Motor neuron (in vitro differentiated cells): ENCODE measurements at regions of chr1 and their contacts with region 1.

Region 1: DNA sequence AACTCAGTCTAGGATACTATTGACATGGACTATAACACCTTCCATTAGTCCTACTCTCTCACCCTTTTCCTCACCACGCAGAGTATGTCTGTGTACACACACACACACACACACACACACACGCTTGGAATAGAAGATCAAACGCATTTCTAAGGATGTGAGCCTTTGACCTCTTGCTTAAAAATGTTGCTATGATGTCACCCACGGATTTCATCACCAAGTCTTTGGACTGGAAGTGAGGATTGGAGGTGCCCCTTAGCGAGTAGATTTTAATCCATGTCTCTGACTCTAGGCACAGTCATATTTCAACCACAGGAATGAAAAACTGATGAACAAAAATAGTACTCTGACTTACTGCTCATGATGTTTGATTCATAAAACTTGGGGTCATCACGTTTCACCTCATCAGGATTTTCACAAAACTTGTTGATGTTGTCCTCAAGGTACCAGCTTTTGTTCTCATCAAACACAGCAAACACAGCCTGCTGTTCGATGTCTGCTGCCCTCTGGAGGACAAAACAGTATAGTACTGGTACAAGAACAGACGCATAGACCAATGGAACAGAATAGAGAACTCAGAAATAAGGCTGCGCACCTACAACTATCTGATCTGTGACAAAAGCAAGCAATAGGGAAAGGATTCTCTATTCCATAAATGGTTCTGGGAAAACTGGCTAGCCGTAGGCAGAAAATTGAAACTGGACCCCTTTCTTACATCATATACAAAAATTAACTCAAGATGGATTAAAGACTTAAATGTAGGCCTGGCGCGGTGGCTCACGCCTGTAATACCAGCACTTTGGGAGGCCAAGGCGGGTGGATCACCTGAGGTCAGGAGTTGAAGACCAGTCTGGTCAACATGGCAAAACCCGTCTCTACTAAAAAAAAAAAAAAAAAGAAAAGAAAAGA is 39.9 kb downstream of the F5 start:
- ATAC-seq: peak; percentile 83 to 97 (median 94)
- H3K4me3 ChIP-seq: no peak overlapping the region
- H3K27ac ChIP-seq: no peak overlapping the region
- H3K4me1 ChIP-seq: no peaks in the 10 kb centered on the region

Region 2: GRCh38 chr1:168342572-168343280 is 1203.6 kb before region 1 on chr1:
- in situ Hi-C with region 1: loop called in 1 of 9 experiments (anchors 25 kb)
- ATAC-seq: peak; percentile 95 to 100 (median 100)
- H3K4me3 ChIP-seq: no peak overlapping the region
- H3K27ac ChIP-seq: no peak overlapping the region
- H3K4me1 ChIP-seq: peaks cover 0 to 2% of the 10 kb centered on the region in 2 donors

Region 3: DNA sequence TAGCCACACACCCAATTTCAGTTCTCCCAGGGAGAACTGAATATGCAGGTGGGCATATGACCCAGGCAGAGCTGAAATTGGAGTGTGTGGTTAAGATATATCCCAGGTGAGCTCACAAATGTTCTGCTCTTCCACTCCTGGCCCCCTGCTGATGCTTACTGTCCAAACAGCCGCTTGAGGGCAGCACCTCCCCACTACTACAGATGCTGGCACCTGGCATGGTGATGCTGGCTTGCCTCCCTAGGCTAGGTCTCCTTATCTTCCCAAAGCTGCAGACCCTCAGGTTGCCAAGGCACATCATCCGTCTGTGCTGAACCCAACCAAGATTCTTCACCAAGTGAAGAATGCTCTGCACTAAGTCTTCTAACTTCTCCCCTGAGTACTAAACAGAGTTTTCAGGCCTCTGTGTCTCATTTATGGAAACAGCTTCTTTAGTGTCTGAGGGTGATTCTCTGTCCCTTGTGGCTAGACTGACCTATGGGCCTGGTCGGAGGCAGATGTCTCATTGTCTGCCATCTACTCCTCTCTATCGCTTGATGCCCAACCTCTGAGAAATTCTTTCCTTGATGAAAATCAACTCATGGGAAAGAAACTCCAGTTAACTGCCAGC is 942.7 kb before region 1 on chr1:
- in situ Hi-C with region 1: loop called in 1 of 9 experiments (anchors 25 kb)
- ATAC-seq: peak; percentile 90 to 99 (median 94)
- H3K4me3 ChIP-seq: no peak overlapping the region
- H3K27ac ChIP-seq: no peak overlapping the region
- H3K4me1 ChIP-seq: peaks cover 3 to 20% of the 10 kb centered on the region in 2 donors

Region 4: DNA sequence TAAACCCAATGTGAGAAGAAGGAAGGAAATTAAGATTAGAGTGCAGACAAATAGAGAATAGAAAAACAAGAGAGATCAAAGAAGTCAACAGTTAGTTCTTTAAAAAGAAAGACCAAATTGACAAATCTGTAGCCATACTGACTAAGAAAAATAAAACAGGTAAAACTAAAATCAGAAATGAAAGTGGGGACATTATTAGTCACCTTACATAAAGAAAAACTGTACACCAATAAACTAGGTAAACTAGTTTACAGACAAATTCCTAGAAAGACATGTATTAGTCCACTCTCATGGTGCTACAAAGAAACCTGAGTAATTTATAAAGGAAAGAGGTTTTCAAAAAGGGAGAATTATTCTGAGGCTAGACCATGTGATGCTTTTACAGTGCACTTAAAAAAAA is 156.0 kb before region 1 on chr1:
- in situ Hi-C with region 1: loop called in 1 of 9 experiments (anchors 25 kb)
- ATAC-seq: no peak
- H3K4me3 ChIP-seq: no peak overlapping the region
- H3K27ac ChIP-seq: no peak overlapping the region
- H3K4me1 ChIP-seq: no peaks in the 10 kb centered on the region

Region 5: DNA sequence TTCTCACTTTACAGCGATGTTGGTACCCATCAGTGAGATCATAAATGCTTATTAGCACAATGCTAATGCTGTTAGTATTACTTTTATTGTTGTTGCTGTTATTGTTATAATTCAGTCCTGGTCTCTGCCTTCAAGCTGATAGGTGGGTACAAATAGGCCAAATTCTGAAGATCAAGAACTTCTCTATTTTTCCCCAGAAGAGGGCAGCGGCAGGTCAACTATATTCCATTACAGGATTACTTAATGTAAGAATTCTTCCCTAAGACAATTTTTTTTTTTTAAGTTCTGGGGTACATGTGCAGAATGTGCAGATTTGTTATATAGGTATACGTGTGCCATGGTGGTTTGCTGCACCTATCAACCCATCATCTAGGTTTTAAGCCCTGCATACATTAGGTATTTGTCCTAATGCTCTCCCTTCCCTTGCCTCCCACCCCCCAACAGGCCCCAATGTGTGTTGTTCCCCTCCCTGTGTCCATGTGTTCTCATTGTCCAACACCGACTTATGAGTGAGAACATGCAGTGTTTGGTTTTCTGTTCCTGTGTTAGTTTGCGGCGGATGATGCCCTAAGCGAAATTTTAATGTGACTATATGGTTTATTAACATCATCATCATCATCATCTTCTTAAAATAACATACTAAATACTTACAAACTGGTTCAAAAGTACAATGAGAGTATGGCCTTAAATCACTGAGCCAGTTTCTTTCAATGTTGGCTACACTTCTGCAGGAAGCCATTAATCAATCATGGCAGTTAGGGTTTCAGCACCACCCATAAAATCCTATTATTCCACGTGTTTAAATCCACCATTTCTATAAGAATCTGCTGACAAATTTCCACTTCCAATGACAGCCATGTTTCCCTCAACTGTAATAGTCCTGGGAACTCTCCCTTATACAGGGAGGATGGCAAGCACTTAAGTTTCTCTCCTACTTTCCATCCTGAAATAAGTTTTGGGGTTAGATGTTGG is 79.8 kb before region 1 on chr1:
- in situ Hi-C with region 1: loop called in 2 of 9 experiments (anchors 10 kb)
- ATAC-seq: peak in 3 of 8 experiments; percentile 61 to 68 (median 62)
- H3K4me3 ChIP-seq: no peak overlapping the region
- H3K27ac ChIP-seq: no peak overlapping the region
- H3K4me1 ChIP-seq: no peaks in the 10 kb centered on the region

Region 6: GRCh38 chr1:169473352-169473751 is 73.0 kb before region 1 on chr1:
- in situ Hi-C with region 1: loop called in 2 of 9 experiments (anchors 10 kb)
- ATAC-seq: no peak
- H3K4me3 ChIP-seq: no peak overlapping the region
- H3K27ac ChIP-seq: no peak overlapping the region
- H3K4me1 ChIP-seq: no peaks in the 10 kb centered on the region

Region 7: GRCh38 chr1:169634145-169634544 is 87.8 kb after region 1 on chr1:
- in situ Hi-C with region 1: no loop called
- ATAC-seq: no peak
- H3K4me3 ChIP-seq: no peak overlapping the region
- H3K27ac ChIP-seq: no peak overlapping the region
- H3K4me1 ChIP-seq: no peaks in the 10 kb centered on the region

Region 8: GRCh38 chr1:169809370-169810095 is 263.2 kb after region 1 on chr1:
- in situ Hi-C with region 1: loop called in 1 of 9 experiments (anchors 25 kb)
- ATAC-seq: peak in 5 of 8 experiments; percentile 24 to 43 (median 38)
- H3K4me3 ChIP-seq: no peak overlapping the region
- H3K27ac ChIP-seq: no peak overlapping the region
- H3K4me1 ChIP-seq: no peaks in the 10 kb centered on the region

Region 9: DNA sequence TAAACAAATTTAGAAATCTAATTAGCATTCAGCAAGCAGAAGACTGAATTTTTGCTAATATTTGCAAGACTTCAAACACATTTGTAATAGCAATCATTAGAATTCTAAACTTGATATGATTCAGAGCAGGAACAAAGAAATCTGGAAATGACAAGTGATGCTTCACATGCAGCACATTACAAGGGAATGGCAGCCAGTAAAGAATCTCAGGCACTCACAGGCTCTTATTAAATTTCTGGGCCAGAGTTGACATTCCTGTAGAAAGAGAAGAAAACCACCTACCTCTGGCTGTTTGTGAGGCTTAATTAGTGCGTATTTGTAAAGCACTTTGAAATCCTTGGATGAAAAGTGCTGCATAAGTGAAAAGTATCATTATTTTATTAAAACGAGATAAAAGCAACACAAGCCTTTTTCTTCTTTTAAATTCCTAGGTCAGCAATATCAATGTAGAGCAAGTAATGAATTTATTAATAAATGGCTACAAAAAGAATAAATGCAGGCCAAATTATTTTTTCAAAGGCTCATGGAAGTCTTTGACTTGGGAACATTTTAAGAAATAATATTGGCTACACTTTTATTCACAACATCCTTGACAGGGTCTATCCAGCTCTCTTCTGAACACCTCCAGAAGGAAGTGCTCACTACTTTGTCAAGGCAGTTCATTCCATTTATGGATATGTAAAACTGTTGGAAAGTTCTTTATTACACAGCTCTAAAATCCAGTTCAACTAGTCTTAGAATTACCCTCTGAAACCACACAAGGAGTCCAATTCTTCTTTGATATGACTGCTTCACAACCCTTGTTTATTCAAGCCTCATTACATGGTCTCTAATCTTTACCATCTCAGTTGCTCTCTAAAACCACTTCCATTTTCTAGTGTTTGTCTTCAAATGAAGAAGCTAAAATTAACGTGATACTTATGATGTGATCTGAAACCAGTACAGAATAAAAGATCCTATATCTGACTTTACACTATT is 379.5 kb after region 1 on chr1:
- in situ Hi-C with region 1: no loop called
- ATAC-seq: no peak
- H3K4me3 ChIP-seq: no peak overlapping the region
- H3K27ac ChIP-seq: no peak overlapping the region
- H3K4me1 ChIP-seq: no peaks in the 10 kb centered on the region